Activated CD8-positive, alpha-beta T cell treated with anti-CD3 and anti-CD28 coated beads, Interleukin-2, amount 10 ng/mL, durations not matched to agents 7 days and 5 days (primary cell): ENCODE measurements at regions of chr5 and their contacts with region 1.

Region 1: GRCh38 chr5:142655339-142656267 is 30.3 kb downstream of the FGF1 start:
- DNase-seq: peak; percentile 73
- ATAC-seq: peak; percentile 94
- H3K4me3 Mint-ChIP-seq: no peak overlapping the region
- H3K27ac Mint-ChIP-seq: no peak overlapping the region
- H3K4me1 Mint-ChIP-seq: no peaks in the 10 kb centered on the region
- H3K27me3 Mint-ChIP-seq: peaks cover 18% of the 10 kb centered on the region

Region 2: GRCh38 chr5:142472300-142472951 is 183.2 kb before region 1 on chr5:
- CTCF ChIA-PET with region 1: no interaction called
- POLR2A ChIA-PET with region 1: no interaction called
- DNase-seq: peak; percentile 54
- ATAC-seq: peak; percentile 89
- H3K4me3 Mint-ChIP-seq: no peak overlapping the region
- H3K27ac Mint-ChIP-seq: peak overlapping the region; percentile 40
- H3K4me1 Mint-ChIP-seq: peaks cover 5% of the 10 kb centered on the region
- H3K27me3 Mint-ChIP-seq: peaks cover 2% of the 10 kb centered on the region

Region 3: GRCh38 chr5:142644640-142645361 is 10.8 kb before region 1 on chr5:
- CTCF ChIA-PET with region 1: interaction called, 25 read pairs
- POLR2A ChIA-PET with region 1: no interaction called
- DNase-seq: no peak
- ATAC-seq: no peak
- H3K4me3 Mint-ChIP-seq: no peak overlapping the region
- H3K27ac Mint-ChIP-seq: no peak overlapping the region
- H3K4me1 Mint-ChIP-seq: peaks cover 6% of the 10 kb centered on the region
- H3K27me3 Mint-ChIP-seq: peaks cover 23% of the 10 kb centered on the region

Region 4: DNA sequence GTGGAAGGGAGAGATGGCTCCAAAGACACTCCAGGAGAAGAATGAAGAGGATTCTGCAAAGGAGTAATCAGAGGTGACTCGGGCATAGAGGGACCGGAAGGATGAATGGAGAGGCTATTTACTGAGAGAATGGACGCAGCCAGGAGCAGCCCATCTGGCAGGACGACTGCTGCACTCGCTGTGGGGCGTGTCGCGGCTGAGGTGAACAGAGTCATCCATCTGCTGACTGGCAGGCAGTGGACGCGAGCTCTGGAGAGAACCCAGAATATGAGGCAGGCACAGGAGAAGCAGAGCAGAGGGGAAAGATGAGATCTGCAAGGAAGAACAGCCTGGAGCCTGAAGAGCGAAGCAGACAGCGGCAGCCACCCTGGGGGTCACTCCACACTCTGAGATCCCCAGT is 13.9 kb after region 1 on chr5:
- CTCF ChIA-PET with region 1: interaction called, 14 read pairs
- POLR2A ChIA-PET with region 1: no interaction called
- DNase-seq: no peak
- ATAC-seq: no peak
- H3K4me3 Mint-ChIP-seq: no peak overlapping the region
- H3K27ac Mint-ChIP-seq: no peak overlapping the region
- H3K4me1 Mint-ChIP-seq: no peaks in the 10 kb centered on the region
- H3K27me3 Mint-ChIP-seq: peaks cover 3% of the 10 kb centered on the region

Region 5: GRCh38 chr5:142699184-142699720 is 43.6 kb after region 1 on chr5:
- CTCF ChIA-PET with region 1: interaction called, 86 read pairs
- POLR2A ChIA-PET with region 1: no interaction called
- DNase-seq: peak; percentile 84
- ATAC-seq: peak; percentile 88
- H3K4me3 Mint-ChIP-seq: no peak overlapping the region
- H3K27ac Mint-ChIP-seq: no peak overlapping the region
- H3K4me1 Mint-ChIP-seq: no peaks in the 10 kb centered on the region
- H3K27me3 Mint-ChIP-seq: peaks cover 21% of the 10 kb centered on the region

Region 6: DNA sequence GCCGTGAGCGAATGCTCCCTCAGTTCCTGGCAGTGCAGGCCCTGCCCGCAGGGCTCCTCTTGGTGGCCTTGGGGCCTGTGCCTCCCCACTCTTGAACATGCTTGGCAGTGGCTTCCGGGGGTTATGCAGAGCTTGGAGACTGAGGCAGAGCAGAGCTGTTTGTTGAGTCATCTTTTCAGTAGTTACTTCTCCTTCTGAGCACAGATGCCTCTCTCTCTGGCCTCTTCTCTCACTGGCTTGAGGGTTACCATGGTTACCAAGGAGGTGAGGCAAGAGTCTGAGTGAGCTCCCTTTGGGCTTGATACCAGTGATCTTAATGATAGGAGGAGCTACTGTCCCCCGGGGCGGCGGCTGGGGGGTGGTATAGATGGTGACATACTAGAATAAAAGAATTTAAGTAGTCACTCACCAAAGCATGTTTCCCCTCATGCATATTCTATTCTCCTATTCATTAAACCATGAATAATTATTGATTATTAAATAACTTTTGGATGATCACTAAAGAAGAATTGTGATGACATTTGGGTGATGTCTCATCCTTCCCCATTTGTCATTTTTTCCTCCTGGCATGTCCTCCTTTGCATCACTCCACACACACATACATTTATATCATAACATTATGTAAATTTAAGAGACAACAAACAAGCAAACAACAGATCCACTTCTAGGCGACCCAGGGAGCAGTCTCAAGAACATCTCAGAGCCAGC is 225.6 kb after region 1 on chr5:
- CTCF ChIA-PET with region 1: interaction called, 13 read pairs
- POLR2A ChIA-PET with region 1: no interaction called
- DNase-seq: no peak
- ATAC-seq: no peak
- H3K4me3 Mint-ChIP-seq: no peak overlapping the region
- H3K27ac Mint-ChIP-seq: no peak overlapping the region
- H3K4me1 Mint-ChIP-seq: peaks cover 6% of the 10 kb centered on the region
- H3K27me3 Mint-ChIP-seq: no peaks in the 10 kb centered on the region